Activated CD4-positive, alpha-beta memory T cell treated with anti-CD3 and anti-CD28 coated beads for 36 hours (primary cell): ENCODE measurements at regions of chr11 and their contacts with region 1.

Region 1: DNA sequence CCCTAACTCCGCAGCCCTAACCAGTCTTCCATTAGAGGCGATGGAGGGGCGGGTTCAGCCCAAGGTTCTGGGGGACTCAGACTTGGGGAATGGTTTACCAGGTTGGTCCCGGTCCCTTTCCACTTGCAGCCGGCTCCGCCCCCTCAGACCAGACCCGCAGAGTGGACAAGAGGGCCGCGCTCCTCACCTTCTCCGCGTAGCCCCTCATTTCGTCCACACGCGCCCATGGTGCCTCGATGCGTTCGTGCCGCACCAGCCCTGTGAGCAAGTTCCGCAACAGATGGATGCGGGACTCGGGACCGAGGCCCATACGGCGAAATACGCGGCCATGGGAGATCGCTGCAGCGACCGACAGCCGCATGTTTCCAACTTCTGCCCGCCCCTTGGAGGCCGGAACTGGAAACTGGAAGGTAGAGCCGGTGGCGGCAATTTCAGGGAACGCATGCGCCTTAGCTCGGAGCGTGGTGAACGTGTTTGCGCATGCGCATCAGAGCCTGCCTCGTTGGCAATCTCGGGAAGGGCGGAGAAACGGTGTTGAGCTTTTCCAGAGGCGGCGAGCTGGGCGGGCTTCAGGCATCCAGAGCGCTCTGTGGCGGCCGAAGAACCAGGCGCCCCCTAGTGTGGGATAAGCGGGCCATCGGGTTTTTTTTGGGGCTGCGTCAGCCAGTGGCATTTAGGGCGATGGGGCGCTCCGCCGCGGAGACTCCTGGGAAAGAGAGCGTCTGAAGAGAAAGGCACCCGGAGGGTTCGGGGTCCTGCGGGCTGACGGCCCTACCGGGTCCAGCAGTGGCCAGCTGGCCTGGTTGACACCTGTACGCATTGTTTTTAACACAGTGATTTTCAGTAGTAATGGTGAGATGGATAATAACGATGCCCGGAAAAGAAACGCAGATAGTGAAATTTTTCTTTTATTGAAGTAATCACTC is at the start of gene MRPL17:
- DNase-seq: peak; percentile 100
- H3K4me3 Mint-ChIP-seq: peak within 1 kb of the TSS; percentile 99
- H3K27ac Mint-ChIP-seq: peak within 1 kb of the TSS; percentile 95
- H3K4me1 Mint-ChIP-seq: peaks cover 36% of the 10 kb centered on the region
- H3K27me3 Mint-ChIP-seq: no peaks in the 10 kb centered on the region
- total RNA-seq, gene MRPL17: 98.5 to 102 TPM

Region 2: DNA sequence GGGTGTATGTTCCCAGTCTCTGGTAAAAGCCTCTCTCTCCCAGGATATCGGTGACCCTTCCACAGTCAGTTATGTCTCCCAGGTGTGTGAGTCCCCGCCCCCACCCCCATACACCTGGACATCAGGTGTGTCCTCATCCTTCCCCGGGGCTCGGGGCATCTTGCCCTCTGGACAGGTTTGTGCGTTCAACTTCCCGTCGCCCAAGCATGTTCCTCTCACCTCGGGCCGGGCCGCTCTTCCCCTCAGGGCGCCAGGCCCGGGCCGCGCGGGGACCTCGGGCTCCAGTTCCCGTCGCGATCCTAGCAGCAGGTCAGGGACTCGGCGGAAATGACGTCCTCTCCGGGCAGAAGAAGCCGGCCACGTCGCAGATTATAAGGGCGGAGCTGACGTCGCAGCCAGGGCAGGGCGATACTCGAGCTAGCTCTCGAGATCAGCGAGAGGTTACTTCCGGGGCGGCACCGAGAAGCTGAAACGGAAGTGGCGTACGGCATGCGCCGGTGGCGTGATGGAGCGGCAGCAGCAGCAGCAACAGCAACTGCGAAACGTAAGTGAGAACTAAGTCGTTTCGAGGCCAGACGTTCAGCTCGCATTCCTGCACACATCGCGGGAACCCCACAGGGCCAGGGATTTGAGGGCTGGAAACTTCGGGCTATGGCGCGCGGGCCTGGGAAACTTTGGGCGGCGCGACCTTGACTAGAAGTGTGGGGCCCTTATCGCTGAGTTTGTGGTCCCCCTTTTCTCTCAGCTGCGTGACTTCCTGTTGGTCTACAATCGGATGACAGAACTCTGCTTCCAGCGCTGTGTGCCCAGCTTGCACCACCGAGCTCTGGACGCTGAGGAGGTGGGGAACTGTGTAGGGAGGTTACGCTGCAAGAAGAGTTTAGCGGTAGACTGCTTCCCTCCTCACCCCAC is 201.9 kb before region 1 on chr11 and contains the starts of genes ARFIP2 and TIMM10B:
- CTCF ChIA-PET with region 1: interaction called, 10 read pairs
- POLR2A ChIA-PET with region 1: interaction called, 3 read pairs
- intact Hi-C with region 1: loop called (anchors 1 kb)
- DNase-seq: peak; percentile 99
- H3K4me3 Mint-ChIP-seq: peak within 1 kb of the TSS; percentile 91
- H3K27ac Mint-ChIP-seq: peak within 1 kb of the TSS; percentile 96
- H3K4me1 Mint-ChIP-seq: peaks cover 35% of the 10 kb centered on the region
- H3K27me3 Mint-ChIP-seq: no peaks in the 10 kb centered on the region
- total RNA-seq, gene ARFIP2: 35.1 to 37.8 TPM
- total RNA-seq, gene TIMM10B: 40.2 to 41.3 TPM

Region 3: DNA sequence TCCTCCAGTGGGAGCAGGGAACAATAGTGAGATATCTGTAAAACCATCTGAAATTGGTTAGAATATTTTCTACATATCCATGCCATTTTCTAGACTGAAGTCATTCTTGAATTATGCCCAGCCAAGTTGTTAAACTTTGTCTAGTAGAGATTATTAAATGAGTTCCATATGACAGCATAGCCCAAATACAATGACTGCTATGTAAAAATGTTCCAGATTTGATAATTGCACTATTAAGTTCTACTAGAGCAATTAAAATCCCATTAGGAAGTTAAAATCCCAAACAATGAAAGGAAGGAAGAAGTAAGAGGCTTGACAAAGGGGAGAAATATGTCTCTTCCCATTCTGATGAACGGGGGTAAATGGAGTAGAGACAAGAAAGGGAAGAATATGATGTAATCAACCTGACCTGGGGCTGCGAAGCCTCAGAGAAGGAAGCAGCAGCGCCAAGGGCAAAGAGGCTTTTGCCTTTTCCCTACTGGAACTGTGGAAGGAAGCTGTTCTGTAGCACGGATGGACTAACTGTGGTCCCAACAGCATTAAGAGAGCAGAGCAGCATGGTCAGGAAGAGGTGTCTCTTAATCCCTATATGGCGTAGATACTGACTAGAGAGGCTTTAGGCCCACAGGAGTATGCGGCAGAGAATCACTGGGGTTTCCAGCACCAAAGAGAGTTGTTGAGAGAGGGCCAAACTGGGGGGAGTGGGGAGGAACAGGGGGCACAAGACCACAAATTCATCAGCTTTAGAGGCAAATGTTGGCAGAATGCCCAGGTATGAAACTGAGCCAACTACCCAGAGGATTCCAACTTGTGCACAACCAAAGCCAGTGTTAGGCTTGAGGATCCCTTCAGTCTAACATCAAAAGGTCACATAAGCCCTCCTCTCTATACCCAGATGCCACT is 106.5 kb before region 1 on chr11:
- CTCF ChIA-PET with region 1: no interaction called
- POLR2A ChIA-PET with region 1: no interaction called
- intact Hi-C with region 1: no loop called
- DNase-seq: no peak
- H3K4me3 Mint-ChIP-seq: no peak overlapping the region
- H3K27ac Mint-ChIP-seq: no peak overlapping the region
- H3K4me1 Mint-ChIP-seq: peaks cover 5% of the 10 kb centered on the region
- H3K27me3 Mint-ChIP-seq: no peaks in the 10 kb centered on the region

Region 4: GRCh38 chr11:6612213-6613041 is 70.8 kb before region 1 on chr11 and contains the start of gene TAF10:
- CTCF ChIA-PET with region 1: interaction called, 35 read pairs
- POLR2A ChIA-PET with region 1: interaction called, 20 read pairs
- intact Hi-C with region 1: no loop called
- DNase-seq: peak; percentile 96
- H3K4me3 Mint-ChIP-seq: peak within 1 kb of the TSS; percentile 86
- H3K27ac Mint-ChIP-seq: peak within 1 kb of the TSS; percentile 92
- H3K4me1 Mint-ChIP-seq: peaks cover 10% of the 10 kb centered on the region
- H3K27me3 Mint-ChIP-seq: no peaks in the 10 kb centered on the region
- total RNA-seq, gene TAF10: 158 to 165 TPM

Region 5: DNA sequence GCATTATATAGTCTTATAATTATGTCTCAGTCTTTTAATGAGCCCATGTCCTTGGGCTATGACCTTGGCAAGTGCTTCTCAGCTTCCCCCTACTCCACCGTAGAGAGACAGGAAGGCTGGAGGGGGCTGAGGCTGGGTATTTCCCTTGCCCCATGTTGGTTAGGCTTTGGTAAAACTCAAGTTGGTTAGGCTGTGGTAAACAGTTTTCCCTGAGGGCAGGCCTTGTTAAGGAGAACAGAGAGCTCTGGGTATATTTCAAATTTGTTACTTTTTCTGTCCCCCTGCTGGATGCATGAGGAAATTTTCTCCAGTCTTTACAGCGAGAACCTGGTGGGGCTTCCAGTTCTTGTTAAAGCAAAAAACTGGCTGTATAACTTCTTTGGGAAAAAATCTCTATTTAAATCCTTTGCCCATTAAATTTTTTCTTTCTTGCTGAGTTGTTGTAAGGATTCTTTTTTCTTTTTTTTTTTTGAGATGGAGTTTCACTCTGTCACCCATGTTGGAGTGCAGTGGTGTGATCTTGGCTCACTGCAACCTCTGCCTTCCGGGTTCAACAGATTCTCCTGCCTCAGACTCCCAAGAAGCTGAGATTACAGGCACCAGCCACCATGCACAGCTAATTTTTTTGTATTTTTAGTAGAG is 15.3 kb before region 1 on chr11:
- CTCF ChIA-PET with region 1: interaction called, 28 read pairs
- POLR2A ChIA-PET with region 1: interaction called, 5 read pairs
- intact Hi-C with region 1: loop called (anchors 1 kb)
- DNase-seq: peak; percentile 66
- H3K4me3 Mint-ChIP-seq: no peak overlapping the region
- H3K27ac Mint-ChIP-seq: peak overlapping the region; percentile 50
- H3K4me1 Mint-ChIP-seq: peaks cover 60% of the 10 kb centered on the region
- H3K27me3 Mint-ChIP-seq: no peaks in the 10 kb centered on the region

Region 6: DNA sequence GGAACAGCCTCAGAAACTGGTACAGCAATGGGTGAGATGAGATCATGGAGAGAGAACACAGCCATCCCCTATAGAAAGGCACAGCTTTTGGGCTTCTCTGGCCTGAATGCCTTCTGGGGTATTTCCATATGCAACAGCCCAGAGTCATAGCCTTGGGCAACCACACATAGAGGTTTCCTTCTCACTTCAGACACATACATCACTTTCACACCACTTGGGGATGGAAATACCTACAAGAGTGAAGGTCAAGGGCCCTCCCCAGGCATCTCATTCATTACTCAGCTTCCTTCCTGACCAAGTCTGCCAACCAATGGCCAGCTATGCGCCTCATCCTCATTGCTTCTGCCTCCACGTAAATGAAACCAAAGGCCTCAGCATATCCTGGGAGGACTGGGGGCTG is 784.5 kb after region 1 on chr11:
- CTCF ChIA-PET with region 1: no interaction called
- POLR2A ChIA-PET with region 1: no interaction called
- intact Hi-C with region 1: no loop called
- DNase-seq: peak; percentile 27
- H3K4me3 Mint-ChIP-seq: no peak overlapping the region
- H3K27ac Mint-ChIP-seq: no peak overlapping the region
- H3K4me1 Mint-ChIP-seq: peaks cover 4% of the 10 kb centered on the region
- H3K27me3 Mint-ChIP-seq: no peaks in the 10 kb centered on the region